GM10248 (cell line): ENCODE measurements at regions of chr1 and their contacts with region 1.

Region 1: GRCh38 chr1:93061895-93062792 is 16.9 kb upstream of the MTF2 start:
- DNase-seq: peak; percentile 57
- CTCF ChIP-seq: peak; percentile 63

Region 2: GRCh38 chr1:93007941-93008577 is 54.1 kb before region 1 on chr1:
- CTCF ChIA-PET with region 1: interaction called, 16 read pairs
- POLR2A ChIA-PET with region 1: no interaction called
- DNase-seq: no peak
- CTCF ChIP-seq: no peak

Region 3: GRCh38 chr1:93015590-93015989 is 46.6 kb before region 1 on chr1:
- CTCF ChIA-PET with region 1: interaction called, 120 read pairs
- POLR2A ChIA-PET with region 1: no interaction called
- DNase-seq: no peak
- CTCF ChIP-seq: no peak

Region 4: GRCh38 chr1:93021539-93022134 is 40.5 kb before region 1 on chr1:
- CTCF ChIA-PET with region 1: interaction called, 120 read pairs
- POLR2A ChIA-PET with region 1: no interaction called
- DNase-seq: peak; percentile 66
- CTCF ChIP-seq: peak; percentile 81

Region 5: DNA sequence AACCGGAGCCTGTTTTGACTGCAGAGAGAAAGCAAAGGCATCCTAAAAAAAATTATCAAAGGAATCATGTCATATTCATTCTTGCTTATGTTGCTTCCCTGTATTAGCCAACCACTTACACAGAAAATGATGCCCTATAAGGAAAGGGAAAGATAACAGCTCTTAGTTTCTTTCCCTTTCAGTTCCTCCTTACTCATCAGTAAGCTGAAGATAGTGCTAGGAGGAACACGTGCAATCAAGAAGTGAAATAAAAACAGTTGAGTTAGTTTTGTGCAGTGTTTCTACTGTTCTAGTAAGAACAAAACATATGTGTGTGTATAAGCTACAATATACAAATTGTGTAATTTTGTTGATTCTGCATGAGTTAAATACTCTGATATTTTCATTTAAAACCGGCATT is 28.4 kb before region 1 on chr1:
- CTCF ChIA-PET with region 1: interaction called, 17 read pairs
- POLR2A ChIA-PET with region 1: no interaction called
- DNase-seq: peak; percentile 70
- CTCF ChIP-seq: no peak

Region 6: GRCh38 chr1:93047618-93048017 is 14.5 kb before region 1 on chr1:
- CTCF ChIA-PET with region 1: interaction called, 29 read pairs
- POLR2A ChIA-PET with region 1: no interaction called
- DNase-seq: no peak
- CTCF ChIP-seq: no peak

Region 7: GRCh38 chr1:93078986-93079654 is 17.0 kb after region 1 on chr1 and contains the start of gene MTF2:
- CTCF ChIA-PET with region 1: interaction called, 24 read pairs
- POLR2A ChIA-PET with region 1: interaction called, 3 read pairs
- DNase-seq: peak; percentile 91
- CTCF ChIP-seq: no peak

Region 8: DNA sequence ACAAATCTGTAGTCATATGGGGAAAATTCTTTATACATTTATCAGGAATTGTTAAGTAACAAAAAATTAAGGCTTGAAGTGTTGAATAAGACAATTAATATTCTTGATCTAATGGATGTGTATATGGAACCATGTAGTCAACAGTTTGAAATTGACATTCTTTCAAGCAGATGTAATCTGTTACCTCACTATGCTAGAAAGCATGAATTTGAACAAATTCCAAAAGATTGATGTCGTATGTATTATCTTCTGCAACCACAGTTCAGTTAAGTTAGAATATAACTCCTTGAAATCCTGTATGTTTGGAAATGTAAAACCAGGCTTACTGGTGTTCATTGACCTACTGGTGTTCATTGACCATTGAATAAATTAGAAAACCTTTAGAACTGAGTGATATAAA is 134.4 kb after region 1 on chr1:
- CTCF ChIA-PET with region 1: no interaction called
- POLR2A ChIA-PET with region 1: no interaction called
- DNase-seq: no peak
- CTCF ChIP-seq: no peak

Region 9: DNA sequence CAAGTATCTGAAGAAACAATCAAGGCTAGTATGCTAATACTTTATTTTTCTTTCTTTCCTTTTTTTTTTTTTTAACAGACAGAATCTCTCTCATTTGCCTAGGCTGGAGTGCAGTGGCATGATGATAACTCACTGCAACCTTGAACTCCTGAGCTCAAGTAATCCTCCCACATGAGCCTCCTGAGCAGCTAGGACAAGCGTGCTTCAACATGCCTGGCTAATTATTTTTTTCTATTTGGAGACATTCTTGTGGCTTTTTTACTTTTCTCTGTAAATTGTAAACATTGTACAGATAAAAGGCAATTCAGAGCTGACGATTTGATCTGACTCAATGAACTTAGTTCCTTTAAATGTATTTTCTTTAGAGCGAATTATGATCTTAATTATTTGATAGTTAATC is 159.8 kb after region 1 on chr1:
- CTCF ChIA-PET with region 1: no interaction called
- POLR2A ChIA-PET with region 1: no interaction called
- DNase-seq: no peak
- CTCF ChIP-seq: no peak